ENCODE measurements at regions of chr2 and their contacts with region 1.

Region 1: GRCh38 chr2:158745044-158745865 is 49.9 kb upstream of the DAPL1 start:
- DNase-seq: peak in 1 of 2 experiments; percentile 67
- H3K4me3 ChIP-seq: no peak overlapping the region
- H3K4me3 Mint-ChIP-seq: no peak overlapping the region
- H3K27ac Mint-ChIP-seq: no peak overlapping the region
- H3K4me1 ChIP-seq: no peaks in the 10 kb centered on the region
- H3K4me1 Mint-ChIP-seq: peaks cover 4% of the 10 kb centered on the region
- H3K27me3 ChIP-seq: no peaks in the 10 kb centered on the region
- H3K27me3 Mint-ChIP-seq: no peaks in the 10 kb centered on the region
- CTCF ChIP-seq: peak; percentile 73 to 75

Region 2: DNA sequence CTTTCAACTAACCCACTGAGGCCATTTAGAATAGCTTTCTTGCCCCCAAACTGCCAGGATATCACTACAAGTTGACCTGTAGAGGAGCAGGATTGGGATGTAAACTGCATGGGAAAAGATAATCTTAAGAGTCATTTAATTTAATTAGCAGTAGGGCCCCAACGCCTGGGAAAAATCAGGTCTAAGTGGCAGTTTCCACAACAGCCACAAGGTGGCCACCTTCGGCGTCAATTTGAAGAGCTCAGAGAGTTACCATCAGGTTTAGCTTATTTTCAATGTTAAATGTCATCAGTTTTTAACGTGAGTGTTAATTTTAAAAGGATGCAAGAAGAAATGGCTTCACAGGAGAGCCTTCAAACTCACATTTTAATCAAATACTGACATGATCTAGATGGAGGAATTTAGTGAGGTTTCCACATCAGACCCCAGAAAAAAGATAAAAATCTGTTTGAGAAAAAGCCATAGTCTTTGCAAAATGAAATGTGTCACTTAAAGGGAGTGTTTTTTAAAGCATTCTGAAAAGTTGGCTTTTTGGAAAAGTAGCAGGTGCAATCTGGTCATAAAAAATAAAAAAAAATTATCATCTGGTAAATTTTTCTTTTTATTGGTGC is 720.9 kb before region 1 on chr2:
- CTCF ChIA-PET with region 1: interaction called, 34 read pairs
- POLR2A ChIA-PET with region 1: no interaction called
- intact Hi-C with region 1: loop called (anchors 1 kb)
- DNase-seq: peak in 1 of 2 experiments; percentile 61
- H3K4me3 ChIP-seq: no peak overlapping the region
- H3K4me3 Mint-ChIP-seq: no peak overlapping the region
- H3K27ac Mint-ChIP-seq: no peak overlapping the region
- H3K4me1 ChIP-seq: no peaks in the 10 kb centered on the region; the same call in 1 of the 2 replicates
- H3K4me1 Mint-ChIP-seq: no peaks in the 10 kb centered on the region
- H3K27me3 ChIP-seq: no peaks in the 10 kb centered on the region
- H3K27me3 Mint-ChIP-seq: no peaks in the 10 kb centered on the region
- CTCF ChIP-seq: peak; percentile 81 to 88

Region 3: DNA sequence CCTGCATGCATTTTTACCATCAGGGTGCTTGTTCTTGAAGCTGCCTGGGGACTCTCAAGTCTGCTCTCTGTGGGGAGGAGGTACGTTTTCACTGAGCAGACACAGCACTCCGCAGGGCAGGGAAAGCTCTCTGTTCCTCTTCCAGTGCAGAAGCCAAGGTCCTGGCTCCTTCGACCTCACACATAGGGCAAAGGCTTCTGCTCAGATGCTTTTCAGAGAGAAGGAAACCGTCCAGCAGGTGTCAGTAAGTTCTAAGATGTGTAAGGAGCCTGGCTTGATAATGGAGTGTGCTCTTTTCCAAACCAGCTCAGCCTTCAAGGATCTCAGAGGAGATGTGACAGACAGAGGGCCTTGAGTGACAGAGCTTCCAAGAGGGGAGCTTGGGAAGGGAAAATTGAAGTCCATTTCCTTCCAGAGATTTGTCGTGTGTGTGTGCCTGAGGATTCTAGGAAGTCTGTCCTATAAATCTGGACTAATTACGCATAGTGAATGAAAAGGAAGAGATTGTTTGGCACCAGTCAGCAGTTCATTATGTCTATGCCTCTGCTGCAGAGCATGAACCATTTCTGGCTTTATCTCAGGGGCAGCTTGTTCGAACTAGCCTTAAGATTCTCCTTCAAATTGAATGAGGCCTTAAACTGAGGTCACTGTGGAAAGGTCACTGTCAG is 710.9 kb before region 1 on chr2:
- CTCF ChIA-PET with region 1: interaction called, 12 read pairs
- POLR2A ChIA-PET with region 1: no interaction called
- intact Hi-C with region 1: loop called (anchors 1 kb)
- DNase-seq: peak; percentile 69 to 75
- H3K4me3 ChIP-seq: no peak overlapping the region
- H3K4me3 Mint-ChIP-seq: no peak overlapping the region
- H3K27ac Mint-ChIP-seq: no peak overlapping the region
- H3K4me1 ChIP-seq: no peaks in the 10 kb centered on the region
- H3K4me1 Mint-ChIP-seq: peaks cover 9% of the 10 kb centered on the region
- H3K27me3 ChIP-seq: no peaks in the 10 kb centered on the region
- H3K27me3 Mint-ChIP-seq: peaks cover 7% of the 10 kb centered on the region
- CTCF ChIP-seq: peak; percentile 71 to 74

Region 4: DNA sequence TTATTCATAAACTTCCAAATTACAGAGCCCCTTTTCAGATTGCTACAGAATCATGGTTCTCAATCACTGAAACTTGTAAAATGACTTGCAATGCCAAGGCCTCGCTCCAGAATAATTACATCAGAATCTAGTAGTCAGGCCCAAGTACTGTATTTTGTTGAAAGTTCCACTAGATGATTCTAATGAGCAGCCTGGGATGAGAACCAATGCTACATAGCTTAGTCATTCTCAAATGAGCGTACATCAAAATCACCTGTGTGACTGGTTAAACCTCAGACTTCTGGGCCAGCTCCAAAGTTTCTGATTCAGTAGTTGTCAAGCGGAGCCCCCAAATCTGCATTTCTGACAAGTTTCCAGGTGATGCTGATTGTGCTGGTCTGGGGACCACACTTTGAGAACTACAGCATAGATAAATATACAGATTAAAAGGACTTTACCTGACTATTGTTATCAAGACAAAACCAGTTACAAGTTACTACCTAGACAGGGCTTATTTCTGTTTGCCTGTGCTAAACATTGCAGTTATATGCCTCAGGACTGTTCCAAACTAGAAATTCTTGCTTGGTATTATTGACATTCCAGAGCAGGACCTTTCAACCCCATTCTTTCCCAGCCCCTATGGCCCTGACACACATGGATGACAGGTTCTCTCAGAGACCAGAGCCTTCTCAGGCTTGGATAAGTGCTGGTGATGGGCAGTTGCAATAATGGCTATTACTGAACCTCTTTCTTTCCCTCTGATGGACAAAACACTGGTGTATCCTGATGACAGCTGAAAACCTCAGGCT is 560.5 kb before region 1 on chr2:
- CTCF ChIA-PET with region 1: interaction called, 3 read pairs
- POLR2A ChIA-PET with region 1: no interaction called
- intact Hi-C with region 1: loop called (anchors 2 kb)
- DNase-seq: peak; percentile 86 to 87
- H3K4me3 ChIP-seq: no peak overlapping the region
- H3K4me3 Mint-ChIP-seq: no peak overlapping the region
- H3K27ac Mint-ChIP-seq: peak overlapping the region; percentile 31
- H3K4me1 ChIP-seq: peaks cover 38% of the 10 kb centered on the region
- H3K4me1 Mint-ChIP-seq: peaks cover 37% of the 10 kb centered on the region
- H3K27me3 ChIP-seq: no peaks in the 10 kb centered on the region
- H3K27me3 Mint-ChIP-seq: no peaks in the 10 kb centered on the region
- CTCF ChIP-seq: no peak

Region 5: GRCh38 chr2:158668001-158668765 is 77.1 kb before region 1 on chr2:
- CTCF ChIA-PET with region 1: interaction called, 11 read pairs
- POLR2A ChIA-PET with region 1: no interaction called
- intact Hi-C with region 1: loop called (anchors 2 kb)
- DNase-seq: no peak
- H3K4me3 ChIP-seq: no peak overlapping the region
- H3K4me3 Mint-ChIP-seq: no peak overlapping the region
- H3K27ac Mint-ChIP-seq: no peak overlapping the region
- H3K4me1 ChIP-seq: no peaks in the 10 kb centered on the region
- H3K4me1 Mint-ChIP-seq: no peaks in the 10 kb centered on the region
- H3K27me3 ChIP-seq: no peaks in the 10 kb centered on the region
- H3K27me3 Mint-ChIP-seq: no peaks in the 10 kb centered on the region
- CTCF ChIP-seq: no peak

Region 6: DNA sequence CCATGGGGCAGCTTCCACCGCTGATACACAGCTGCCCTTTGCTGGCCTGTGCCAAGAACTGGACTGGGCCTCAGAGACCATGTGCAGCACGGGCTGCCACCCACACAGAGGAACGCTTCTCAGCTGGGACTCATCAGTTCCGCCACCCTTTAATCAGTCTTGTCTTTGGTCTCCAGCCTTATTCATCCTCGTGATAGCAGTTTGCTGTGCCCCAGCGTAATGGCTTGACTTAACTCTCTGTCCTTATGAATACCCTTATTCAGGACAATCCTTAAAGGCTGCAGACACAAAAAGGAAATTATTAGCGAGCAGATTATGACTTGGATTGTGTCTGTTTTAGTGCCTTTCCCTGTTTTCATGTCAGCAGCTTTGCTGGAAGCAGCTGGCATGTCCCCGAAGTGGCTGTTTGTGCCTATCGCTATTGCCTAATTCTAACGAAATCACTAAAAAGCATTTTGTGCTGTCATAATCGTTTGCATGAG is 59.0 kb before region 1 on chr2:
- CTCF ChIA-PET with region 1: interaction called, 4 read pairs
- POLR2A ChIA-PET with region 1: no interaction called
- intact Hi-C with region 1: loop called (anchors 5 kb)
- DNase-seq: no peak
- H3K4me3 ChIP-seq: no peak overlapping the region
- H3K4me3 Mint-ChIP-seq: no peak overlapping the region
- H3K27ac Mint-ChIP-seq: no peak overlapping the region
- H3K4me1 ChIP-seq: no peaks in the 10 kb centered on the region
- H3K4me1 Mint-ChIP-seq: no peaks in the 10 kb centered on the region
- H3K27me3 ChIP-seq: no peaks in the 10 kb centered on the region
- H3K27me3 Mint-ChIP-seq: no peaks in the 10 kb centered on the region
- CTCF ChIP-seq: no peak

Region 7: DNA sequence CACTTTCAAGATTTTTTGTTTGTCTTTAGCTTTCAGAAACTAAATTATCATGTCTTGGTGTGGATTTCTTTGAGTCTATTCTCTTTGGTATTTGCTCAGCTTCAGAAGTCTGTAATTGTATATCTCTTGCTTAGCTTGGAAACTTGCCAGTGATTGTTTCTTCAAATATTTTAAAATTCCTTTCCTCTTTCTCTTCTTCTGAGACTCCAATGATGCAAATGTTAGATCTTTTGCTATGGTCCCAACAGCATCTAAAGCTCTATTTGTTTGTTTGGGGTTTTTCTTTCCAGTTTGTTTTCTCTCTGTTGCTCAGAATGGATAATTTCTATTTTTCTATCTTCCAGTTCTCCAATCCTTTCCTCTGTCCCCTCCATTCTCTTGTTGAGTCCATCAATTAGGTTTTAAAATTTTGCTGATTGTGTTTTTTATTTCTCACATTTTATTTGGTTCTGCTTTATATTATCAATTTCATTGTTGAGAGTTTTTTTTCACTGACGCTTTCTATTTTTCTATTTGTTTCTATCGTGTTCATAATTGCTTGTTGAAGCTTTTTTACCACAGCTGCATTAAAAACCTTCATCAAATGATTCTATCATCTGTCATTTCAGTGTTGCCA is 31.6 kb before region 1 on chr2:
- CTCF ChIA-PET with region 1: no interaction called
- POLR2A ChIA-PET with region 1: no interaction called
- intact Hi-C with region 1: no loop called
- DNase-seq: no peak
- H3K4me3 ChIP-seq: no peak overlapping the region
- H3K4me3 Mint-ChIP-seq: no peak overlapping the region
- H3K27ac Mint-ChIP-seq: no peak overlapping the region
- H3K4me1 ChIP-seq: no peaks in the 10 kb centered on the region
- H3K4me1 Mint-ChIP-seq: peaks cover 4% of the 10 kb centered on the region
- H3K27me3 ChIP-seq: no peaks in the 10 kb centered on the region
- H3K27me3 Mint-ChIP-seq: no peaks in the 10 kb centered on the region
- CTCF ChIP-seq: no peak

Region 8: GRCh38 chr2:158723917-158724690 is 21.2 kb before region 1 on chr2:
- CTCF ChIA-PET with region 1: interaction called, 17 read pairs
- POLR2A ChIA-PET with region 1: no interaction called
- intact Hi-C with region 1: no loop called
- DNase-seq: no peak
- H3K4me3 ChIP-seq: no peak overlapping the region
- H3K4me3 Mint-ChIP-seq: no peak overlapping the region
- H3K27ac Mint-ChIP-seq: peak overlapping the region; percentile 4
- H3K4me1 ChIP-seq: peaks cover 17% of the 10 kb centered on the region
- H3K4me1 Mint-ChIP-seq: peaks cover 12% of the 10 kb centered on the region
- H3K27me3 ChIP-seq: no peaks in the 10 kb centered on the region
- H3K27me3 Mint-ChIP-seq: peaks cover 3% of the 10 kb centered on the region
- CTCF ChIP-seq: peak; percentile 15 to 17